ENCODE measurements at regions of chr1 and their contacts with region 1.

Region 1: DNA sequence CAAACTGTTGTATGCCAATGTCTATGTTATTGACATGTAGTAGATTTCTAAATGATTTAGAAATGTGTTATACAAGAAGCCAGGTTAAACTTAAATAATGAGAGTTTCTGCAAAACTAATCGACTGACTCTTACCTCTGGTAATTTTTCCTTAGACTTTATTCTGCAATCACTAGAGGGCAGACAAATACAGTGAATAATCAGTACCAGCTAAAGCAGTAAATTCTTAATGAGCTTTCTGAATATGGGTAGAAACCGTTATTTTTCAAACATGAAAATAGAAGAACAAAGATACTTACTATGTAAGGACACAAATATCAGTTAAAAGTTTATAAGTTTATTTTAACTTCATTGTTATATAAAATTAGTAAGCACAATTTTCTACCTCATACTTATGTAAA is 97.9 kb upstream of the RGS1 start:
- DNase-seq: no peak
- H3K4me3 ChIP-seq: no peak overlapping the region
- H3K27ac ChIP-seq: peak overlapping the region in 2 of 4 donors; percentile 34 to 40
- H3K4me1 ChIP-seq: peaks cover 0 to 11% (median 0%) of the 10 kb centered on the region in 4 donors
- H3K27me3 ChIP-seq: peaks cover 4% of the 10 kb centered on the region
- CTCF ChIP-seq: peak; percentile 29 to 65 (median 43)
- EP300 ChIP-seq: no peak
- POLR2A ChIP-seq: no peak

Region 2: GRCh38 chr1:192263436-192263835 is 214.2 kb before region 1 on chr1:
- in situ Hi-C with region 1: no loop called
- intact Hi-C with region 1: no loop called
- DNase-seq: no peak
- H3K4me3 ChIP-seq: no peak overlapping the region
- H3K27ac ChIP-seq: no peak overlapping the region
- H3K4me1 ChIP-seq: no peaks in the 10 kb centered on the region
- H3K27me3 ChIP-seq: no peaks in the 10 kb centered on the region
- CTCF ChIP-seq: no peak
- EP300 ChIP-seq: no peak
- POLR2A ChIP-seq: no peak

Region 3: DNA sequence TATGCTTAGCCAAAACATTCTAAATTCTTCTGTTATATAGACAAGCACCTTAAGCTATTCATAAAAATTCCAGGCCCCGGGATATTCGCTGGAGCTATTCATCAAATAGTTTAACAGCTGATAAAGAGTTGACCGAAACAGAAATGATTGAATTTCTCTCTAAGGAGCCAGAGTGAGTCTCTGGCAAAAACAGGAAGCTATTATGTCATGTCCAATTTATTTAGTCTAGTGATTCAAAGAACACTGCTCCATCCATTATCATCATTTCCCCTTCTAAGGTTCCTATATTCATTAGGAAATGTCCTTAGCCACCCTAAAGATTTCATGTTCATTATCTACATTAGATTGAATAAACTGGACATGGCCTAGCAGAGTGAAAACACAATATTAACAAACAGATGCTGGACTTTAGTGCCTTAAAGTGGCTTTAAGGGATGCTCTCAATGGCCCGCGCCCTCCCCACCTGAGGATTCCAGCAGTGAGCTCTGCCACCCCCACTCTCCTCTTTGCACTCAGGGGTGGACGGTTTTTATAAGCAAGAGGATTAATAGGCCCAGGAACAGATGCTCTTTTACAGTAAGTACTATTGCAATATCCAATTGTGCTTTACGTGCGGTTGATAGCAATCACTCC is 24.2 kb before region 1 on chr1:
- in situ Hi-C with region 1: no loop called
- intact Hi-C with region 1: no loop called
- DNase-seq: no peak
- H3K4me3 ChIP-seq: no peak overlapping the region
- H3K27ac ChIP-seq: no peak overlapping the region
- H3K4me1 ChIP-seq: no peaks in the 10 kb centered on the region
- H3K27me3 ChIP-seq: no peaks in the 10 kb centered on the region
- CTCF ChIP-seq: no peak
- EP300 ChIP-seq: no peak
- POLR2A ChIP-seq: no peak

Region 4: DNA sequence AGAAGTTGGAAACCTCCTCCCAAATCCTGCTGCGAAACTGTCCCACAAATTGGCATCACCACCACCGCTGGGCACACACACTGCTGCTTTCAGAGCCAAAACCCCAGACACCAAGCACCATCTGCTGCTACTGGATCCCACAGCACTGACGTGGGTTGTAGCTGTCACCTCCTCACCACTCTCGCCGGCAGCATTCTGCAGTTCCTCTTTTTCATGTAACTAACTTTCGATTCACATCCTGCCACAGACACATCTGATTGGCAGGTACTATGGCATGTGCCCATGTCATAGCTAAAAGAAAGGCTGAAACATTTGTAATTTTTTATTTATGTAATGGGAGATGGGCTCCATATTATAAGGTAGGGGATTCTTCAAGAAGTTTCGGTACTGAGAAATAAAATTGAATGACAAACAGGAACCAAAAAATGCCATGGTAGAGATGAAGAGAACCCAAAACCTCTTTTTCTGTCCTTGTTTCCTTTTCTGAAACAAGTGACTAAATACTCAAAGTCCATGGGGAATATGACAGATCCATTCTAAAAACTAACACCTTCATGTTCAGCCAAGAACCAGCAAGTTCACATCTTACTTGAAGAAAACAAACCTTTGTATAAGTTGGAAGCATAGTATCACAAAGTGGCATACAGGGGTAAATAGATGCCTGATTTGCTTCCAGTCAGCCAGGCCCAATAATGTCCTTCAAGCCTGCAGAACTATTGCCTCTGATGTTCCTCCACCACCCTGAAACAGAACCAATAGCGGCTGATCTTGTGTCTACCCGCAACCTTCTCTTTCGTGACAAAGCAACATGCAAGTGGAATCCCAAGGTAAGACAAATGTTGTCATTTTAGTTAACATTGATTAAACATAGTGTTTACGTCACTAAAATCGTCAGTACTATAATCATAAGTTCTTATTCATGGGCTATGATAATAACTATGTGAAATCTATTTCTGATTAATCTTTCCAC is 131.8 kb after region 1 on chr1:
- in situ Hi-C with region 1: loop called (anchors 5 to 10 kb)
- intact Hi-C with region 1: loop called (anchors 2 kb)
- DNase-seq: peak; percentile 81
- H3K4me3 ChIP-seq: no peak overlapping the region
- H3K27ac ChIP-seq: peak overlapping the region in 2 of 4 donors; percentile 25 to 27
- H3K4me1 ChIP-seq: peaks cover 0 to 8% (median 0%) of the 10 kb centered on the region in 4 donors
- H3K27me3 ChIP-seq: no peaks in the 10 kb centered on the region
- CTCF ChIP-seq: no peak
- EP300 ChIP-seq: no peak
- POLR2A ChIP-seq: no peak

Region 5: DNA sequence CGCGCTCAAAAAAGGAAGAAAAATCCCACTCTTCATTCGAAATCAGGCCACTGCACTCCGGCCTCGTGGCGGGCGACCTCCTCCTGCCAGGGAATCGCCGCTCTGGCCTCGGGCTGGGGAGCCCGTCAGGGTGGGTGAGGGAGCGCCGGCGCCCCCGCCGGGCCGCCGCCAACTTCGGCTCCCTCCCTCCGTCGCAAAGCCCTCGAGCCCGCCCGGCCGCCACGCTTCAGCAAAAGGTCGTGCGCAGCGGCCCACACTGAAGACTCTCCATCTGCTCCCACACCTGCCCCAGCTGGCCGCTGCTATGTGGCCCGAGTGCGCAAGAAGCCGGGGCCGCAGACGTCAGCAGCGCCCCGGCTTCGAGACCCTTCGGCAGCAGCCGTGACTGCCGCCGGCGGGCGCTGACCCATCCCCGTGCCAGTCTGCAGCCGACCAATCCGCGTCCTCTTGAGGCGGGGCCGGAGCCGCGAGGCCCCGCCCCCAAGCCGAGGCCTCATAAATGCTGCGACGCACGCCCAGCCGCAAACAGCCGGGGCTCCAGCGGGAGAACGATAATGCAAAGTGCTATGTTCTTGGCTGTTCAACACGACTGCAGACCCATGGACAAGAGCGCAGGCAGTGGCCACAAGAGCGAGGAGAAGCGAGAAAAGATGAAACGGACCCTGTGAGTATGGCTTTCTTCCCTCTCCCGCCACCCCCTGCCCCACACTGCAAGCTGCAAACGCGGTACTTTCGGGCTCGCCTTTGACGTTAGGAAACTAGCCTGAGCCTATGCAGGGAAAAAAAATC is 331.1 kb after region 1 on chr1 and contains the start of gene RGS2:
- in situ Hi-C with region 1: no loop called
- intact Hi-C with region 1: loop called (anchors 2 kb)
- DNase-seq: peak; percentile 94
- H3K4me3 ChIP-seq: peak within 1 kb of the TSS; percentile 47 to 96 (median 62)
- H3K27ac ChIP-seq: peak within 1 kb of the TSS; percentile 92 to 96 (median 94)
- H3K4me1 ChIP-seq: peaks cover 0 to 25% (median 4%) of the 10 kb centered on the region in 4 donors
- H3K27me3 ChIP-seq: no peaks in the 10 kb centered on the region
- CTCF ChIP-seq: no peak
- EP300 ChIP-seq: no peak
- POLR2A ChIP-seq: peak; percentile 99
- total RNA-seq, gene RGS2: 22.1 to 132 (median 68.9) TPM

Region 6: GRCh38 chr1:192941722-192942411 is 464.2 kb after region 1 on chr1:
- in situ Hi-C with region 1: no loop called
- intact Hi-C with region 1: no loop called
- DNase-seq: no peak
- H3K4me3 ChIP-seq: no peak overlapping the region
- H3K27ac ChIP-seq: peak overlapping the region in 1 of 4 donors; percentile 4
- H3K4me1 ChIP-seq: peaks cover 0 to 15% (median 0%) of the 10 kb centered on the region in 4 donors
- H3K27me3 ChIP-seq: no peaks in the 10 kb centered on the region
- CTCF ChIP-seq: no peak
- EP300 ChIP-seq: no peak
- POLR2A ChIP-seq: no peak

Region 7: DNA sequence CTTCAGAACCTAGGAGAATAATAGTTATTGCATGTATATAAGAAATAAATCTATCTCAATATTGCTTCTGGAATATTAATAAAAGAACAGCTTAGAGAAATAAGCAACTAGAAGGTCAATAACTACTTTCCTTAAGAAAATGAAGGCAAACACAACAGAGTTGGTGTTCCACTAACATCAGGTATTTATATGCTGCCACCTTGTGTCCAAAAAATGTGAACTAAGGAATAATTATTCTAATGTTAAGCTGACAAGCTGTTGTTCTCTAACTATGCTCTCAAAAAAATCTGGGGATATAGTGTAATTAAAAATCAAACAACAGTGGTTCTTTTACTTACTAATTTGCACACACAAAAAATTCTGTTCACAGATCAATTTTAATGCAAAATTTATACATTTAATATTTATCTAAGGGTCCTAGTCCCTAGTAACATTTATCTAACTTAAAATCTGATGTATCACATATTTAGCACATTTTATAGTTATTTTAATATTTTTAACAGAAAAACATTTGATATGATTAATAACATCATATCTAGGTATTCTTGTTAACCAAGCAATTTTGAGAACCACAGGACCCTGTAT is 541.9 kb after region 1 on chr1:
- in situ Hi-C with region 1: loop called in 3 of 4 experiments (anchors 10 to 25 kb)
- intact Hi-C with region 1: no loop called
- DNase-seq: no peak
- H3K4me3 ChIP-seq: no peak overlapping the region
- H3K27ac ChIP-seq: peak overlapping the region in 2 of 4 donors; percentile 7 to 27
- H3K4me1 ChIP-seq: peaks cover 0 to 11% (median 0%) of the 10 kb centered on the region in 4 donors
- H3K27me3 ChIP-seq: no peaks in the 10 kb centered on the region
- CTCF ChIP-seq: peak; percentile 44 to 70 (median 56)
- EP300 ChIP-seq: no peak
- POLR2A ChIP-seq: no peak

Region 8: GRCh38 chr1:193121616-193122593 is 644.3 kb after region 1 on chr1 and contains the start of gene CDC73:
- in situ Hi-C with region 1: no loop called
- intact Hi-C with region 1: loop called (anchors 5 kb)
- DNase-seq: peak; percentile 99
- H3K4me3 ChIP-seq: peak within 1 kb of the TSS; percentile 41 to 99 (median 81)
- H3K27ac ChIP-seq: peak within 1 kb of the TSS; percentile 94 to 99 (median 96)
- H3K4me1 ChIP-seq: peaks cover 7 to 24% (median 10%) of the 10 kb centered on the region in 4 donors
- H3K27me3 ChIP-seq: no peaks in the 10 kb centered on the region
- CTCF ChIP-seq: peak; percentile 87 to 99 (median 94)
- EP300 ChIP-seq: peak; percentile 76
- POLR2A ChIP-seq: peak; percentile 95
- total RNA-seq, gene CDC73: 26.2 to 208 (median 54.6) TPM